Psoas muscle (tissue), 8 donors: ENCODE measurements at regions of chr3 and their contacts with region 1.

Region 1: DNA sequence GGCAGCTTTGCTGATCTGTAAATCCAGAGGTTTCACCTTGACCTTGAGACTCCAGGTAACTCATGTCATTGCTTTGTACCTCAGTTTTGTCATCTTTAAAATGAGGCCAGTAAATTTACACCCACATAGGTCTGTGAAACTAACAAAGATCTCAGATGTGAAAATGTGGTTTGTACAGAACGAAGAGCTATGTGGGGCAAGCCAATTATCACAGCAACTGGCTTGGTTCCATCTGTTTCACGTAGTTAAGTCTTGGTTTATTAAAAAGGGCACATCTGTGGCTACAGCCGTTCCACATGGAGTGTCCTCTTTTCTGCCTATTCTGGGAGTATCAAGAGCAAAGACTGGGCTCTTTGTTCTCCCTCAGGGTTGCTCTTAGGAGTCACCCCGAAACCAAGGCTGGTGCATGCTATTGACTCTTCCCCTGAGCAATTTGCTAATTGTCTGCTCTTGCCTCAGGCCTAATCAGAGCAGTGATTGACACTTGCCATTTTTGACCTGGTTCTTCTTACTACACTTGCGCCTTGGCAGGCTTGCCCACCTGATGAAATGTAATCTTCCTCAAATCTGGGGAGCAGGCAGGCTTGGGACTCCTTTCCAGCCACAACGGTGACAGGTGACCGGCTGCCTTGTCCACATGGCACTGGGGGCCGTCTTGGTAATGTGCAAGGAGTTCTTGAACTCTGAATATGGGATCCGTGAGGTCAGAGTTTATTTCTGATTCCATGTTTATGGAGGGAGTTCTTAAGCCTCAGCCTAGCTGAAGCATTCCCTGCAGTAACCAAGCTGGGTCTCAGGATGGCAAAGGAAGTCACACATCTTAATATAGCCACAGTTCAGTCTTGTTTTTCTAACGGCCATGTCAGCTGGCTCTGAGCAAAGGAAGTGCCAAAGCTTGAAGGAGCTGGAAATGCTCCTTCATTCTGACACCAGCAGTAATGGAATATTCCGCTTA is 40.1 kb downstream of the EAF1 start:
- DNase-seq: peak; percentile 37 to 86
- ATAC-seq: peak; percentile 88 to 96 (median 95)
- H3K4me3 ChIP-seq: no peak overlapping the region
- H3K27ac ChIP-seq: peak overlapping the region; percentile 89
- H3K4me1 ChIP-seq: peaks cover 23% of the 10 kb centered on the region
- H3K27me3 ChIP-seq: no peaks in the 10 kb centered on the region
- CTCF ChIP-seq: no peak

Region 2: DNA sequence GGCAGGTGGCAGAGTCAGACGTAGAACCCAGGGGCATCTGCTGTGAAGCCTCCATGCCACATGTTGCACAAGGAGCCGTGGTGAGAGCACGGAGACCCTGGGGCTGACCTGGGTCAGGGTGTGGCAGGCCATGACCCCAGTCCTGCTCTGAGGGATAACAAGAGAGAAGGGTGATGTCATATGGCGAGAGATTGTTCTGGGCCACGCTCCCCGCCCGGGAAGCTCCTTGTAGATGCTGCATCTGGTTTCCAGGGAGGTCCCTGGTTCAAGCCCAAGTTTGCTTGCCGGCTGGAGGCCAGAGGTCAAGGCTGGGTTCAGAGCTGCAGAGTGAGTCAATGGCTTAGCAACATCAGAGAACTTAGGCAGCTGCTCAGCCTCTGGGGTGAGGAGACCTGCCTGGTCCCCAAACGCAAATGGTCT is 631.4 kb before region 1 on chr3:
- intact Hi-C with region 1: no loop called
- DNase-seq: peak; percentile 78 to 90
- ATAC-seq: peak in 3 of 4 donors; percentile 64 to 80 (median 66)
- H3K4me3 ChIP-seq: no peak overlapping the region
- H3K27ac ChIP-seq: no peak overlapping the region
- H3K4me1 ChIP-seq: no peaks in the 10 kb centered on the region
- H3K27me3 ChIP-seq: peaks cover 0 to 4% (median 0%) of the 10 kb centered on the region in 3 donors
- CTCF ChIP-seq: no peak

Region 3: DNA sequence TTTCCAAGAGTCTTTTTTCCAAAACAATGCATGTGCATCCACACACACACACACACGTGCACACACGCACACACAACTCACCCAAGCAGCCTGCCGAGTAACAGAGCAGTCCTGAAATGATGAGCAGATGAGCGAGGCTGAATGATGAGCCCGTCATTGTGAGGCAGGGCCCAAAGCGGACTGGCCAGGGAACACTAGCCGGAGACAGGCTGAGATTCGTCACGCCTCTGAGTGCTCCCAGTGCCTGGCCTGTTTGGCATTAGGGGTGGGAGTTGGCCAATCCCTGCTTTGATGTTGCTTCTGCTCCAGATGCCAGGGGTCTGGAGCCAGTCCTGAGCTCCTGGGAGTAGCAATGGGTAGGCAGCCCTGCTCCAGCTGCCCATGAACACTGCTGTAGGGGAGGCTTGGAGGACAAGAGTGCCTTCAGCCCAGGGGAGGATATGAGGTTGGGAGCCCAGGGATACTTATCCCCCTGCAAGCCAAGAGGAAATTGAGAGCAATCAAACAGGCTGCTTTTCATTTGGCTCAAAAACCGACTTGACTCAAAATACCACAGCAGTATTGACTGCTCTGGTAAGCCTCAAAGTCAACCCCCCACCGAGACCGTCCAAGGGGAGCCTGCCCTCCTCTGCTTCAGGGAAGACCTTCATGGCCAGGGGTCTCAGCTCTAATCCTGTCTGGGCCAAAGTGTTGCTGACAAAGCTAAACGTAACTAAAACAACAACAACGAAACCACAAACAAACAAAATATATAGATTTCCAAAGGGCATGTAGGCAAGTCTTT is 31.1 kb after region 1 on chr3:
- intact Hi-C with region 1: loop called in 1 of 2 experiments (anchors 2 kb)
- DNase-seq: peak; percentile 76 to 89
- ATAC-seq: peak; percentile 87 to 89 (median 88)
- H3K4me3 ChIP-seq: no peak overlapping the region
- H3K27ac ChIP-seq: peak overlapping the region; percentile 85
- H3K4me1 ChIP-seq: peaks cover 67% of the 10 kb centered on the region
- H3K27me3 ChIP-seq: no peaks in the 10 kb centered on the region
- CTCF ChIP-seq: no peak

Region 4: GRCh38 chr3:15505479-15506165 is 38.1 kb after region 1 on chr3:
- intact Hi-C with region 1: loop called (anchors 5 kb)
- DNase-seq: no peak
- ATAC-seq: peak in 3 of 4 donors; percentile 36 to 64 (median 60)
- H3K4me3 ChIP-seq: no peak overlapping the region
- H3K27ac ChIP-seq: peak overlapping the region; percentile 23
- H3K4me1 ChIP-seq: peaks cover 23% of the 10 kb centered on the region
- H3K27me3 ChIP-seq: no peaks in the 10 kb centered on the region
- CTCF ChIP-seq: no peak

Region 5: GRCh38 chr3:15512166-15512565 is 44.7 kb after region 1 on chr3:
- intact Hi-C with region 1: loop called (anchors 5 kb)
- DNase-seq: peak; percentile 43 to 79
- ATAC-seq: peak; percentile 69 to 84 (median 79)
- H3K4me3 ChIP-seq: no peak overlapping the region
- H3K27ac ChIP-seq: peak overlapping the region; percentile 70
- H3K4me1 ChIP-seq: peaks cover 52% of the 10 kb centered on the region
- H3K27me3 ChIP-seq: no peaks in the 10 kb centered on the region
- CTCF ChIP-seq: no peak